ENCODE measurements at regions of chr7 and their contacts with region 1.

Region 1: GRCh38 chr7:94183289-94183749 is 179.2 kb upstream of the BET1 start:
- DNase-seq: peak; percentile 95
- ATAC-seq: peak; percentile 88
- H3K4me3 ChIP-seq: peak overlapping the region; percentile 29; the same call in 1 of the 2 replicates
- H3K27ac ChIP-seq: peak overlapping the region; percentile 97
- H3K4me1 ChIP-seq: peaks cover 24% of the 10 kb centered on the region
- H3K27me3 ChIP-seq: no peaks in the 10 kb centered on the region
- CTCF ChIP-seq: no peak

Region 2: DNA sequence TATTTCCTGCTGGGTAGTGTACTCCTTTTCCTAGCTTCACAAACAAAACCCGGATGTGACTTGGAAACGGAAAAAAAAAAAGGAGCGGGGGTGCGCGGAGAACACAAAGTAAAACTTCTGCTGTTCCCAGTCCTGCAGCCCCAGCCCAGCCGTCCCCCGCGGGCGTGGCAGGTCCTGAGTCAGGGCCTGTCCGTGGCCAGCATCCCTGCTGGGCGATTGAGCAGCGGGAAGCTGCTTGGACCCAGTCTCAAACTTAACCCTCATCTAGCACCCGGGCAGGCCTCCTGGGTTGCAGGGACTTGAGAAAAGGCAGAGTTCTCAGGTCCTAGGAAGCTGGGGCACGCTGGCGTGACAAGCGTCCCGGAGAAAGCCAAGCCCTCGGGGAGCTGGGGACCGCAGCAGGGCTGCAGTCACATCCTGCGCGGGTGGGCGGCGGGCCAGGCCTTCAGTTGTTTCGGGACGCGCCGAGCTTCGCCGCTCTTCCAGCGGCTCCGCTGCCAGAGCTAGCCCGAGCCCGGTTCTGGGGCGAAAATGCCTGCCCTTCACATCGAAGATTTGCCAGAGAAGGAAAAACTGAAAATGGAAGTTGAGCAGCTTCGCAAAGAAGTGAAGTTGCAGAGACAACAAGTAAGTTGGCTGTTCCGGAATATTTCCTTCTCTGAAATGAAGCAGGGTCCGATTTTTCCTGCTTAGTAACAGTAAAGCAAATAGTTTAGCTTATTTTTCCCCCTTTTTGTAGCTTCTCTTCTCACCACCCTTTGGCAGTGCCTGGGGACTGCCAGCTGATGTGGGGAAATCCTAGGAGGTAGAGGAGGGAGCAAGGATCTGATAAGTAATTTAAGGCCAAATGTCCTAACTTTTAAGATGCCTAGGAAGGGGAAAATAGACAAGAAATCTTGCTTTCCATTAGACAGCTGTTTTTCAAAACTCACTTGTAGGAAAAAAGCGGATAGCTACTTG is 261.4 kb before region 1 on chr7 and contains the start of gene GNG11:
- CTCF ChIA-PET with region 1: no interaction called
- POLR2A ChIA-PET with region 1: interaction called, 12 read pairs
- intact Hi-C with region 1: no loop called
- DNase-seq: peak; percentile 65
- ATAC-seq: peak; percentile 87
- H3K4me3 ChIP-seq: peak within 1 kb of the TSS; percentile 73
- H3K27ac ChIP-seq: peak within 1 kb of the TSS; percentile 68
- H3K4me1 ChIP-seq: no peaks in the 10 kb centered on the region
- H3K27me3 ChIP-seq: no peaks in the 10 kb centered on the region
- CTCF ChIP-seq: no peak
- total RNA-seq, gene GNG11: 3.0 and 4.4 TPM in 2 replicates

Region 3: GRCh38 chr7:94004024-94004951 is 179.0 kb before region 1 on chr7 and contains the start of gene BET1:
- CTCF ChIA-PET with region 1: no interaction called
- POLR2A ChIA-PET with region 1: no interaction called
- intact Hi-C with region 1: loop called (anchors 1 kb)
- DNase-seq: peak; percentile 97
- ATAC-seq: peak; percentile 92
- H3K4me3 ChIP-seq: peak within 1 kb of the TSS; percentile 99
- H3K27ac ChIP-seq: peak within 1 kb of the TSS; percentile 64
- H3K4me1 ChIP-seq: peaks cover 19% of the 10 kb centered on the region
- H3K27me3 ChIP-seq: no peaks in the 10 kb centered on the region
- CTCF ChIP-seq: no peak
- total RNA-seq, gene BET1: 7.9 and 12.1 TPM in 2 replicates

Region 4: DNA sequence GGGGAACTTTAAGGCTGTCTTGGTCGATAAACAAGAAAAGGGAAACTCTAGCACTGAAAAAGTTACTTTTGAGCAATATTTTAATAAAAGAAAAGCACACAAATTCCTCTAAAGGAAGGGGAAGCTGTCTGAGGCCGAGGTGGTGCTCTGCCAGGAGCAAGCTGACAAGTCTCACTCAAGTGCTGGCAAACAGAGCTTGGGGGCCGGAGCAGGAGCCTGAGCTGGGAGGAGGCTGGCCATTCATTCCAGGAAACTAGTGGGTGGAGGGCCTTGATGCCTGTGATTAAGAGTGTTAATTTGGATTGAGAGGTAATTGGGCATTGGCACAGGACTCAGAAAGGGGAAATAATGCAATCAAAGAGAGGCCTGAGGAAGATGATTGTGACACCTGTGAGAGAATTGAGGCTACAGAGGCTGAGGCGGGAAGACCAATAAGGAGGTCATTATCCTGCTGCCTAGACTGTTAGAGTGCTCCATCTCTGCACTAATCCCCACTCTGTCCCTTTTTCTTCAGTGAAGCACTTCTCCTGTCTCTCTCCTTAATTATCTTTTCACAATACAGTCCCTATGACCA is 56.4 kb after region 1 on chr7:
- CTCF ChIA-PET with region 1: no interaction called
- POLR2A ChIA-PET with region 1: no interaction called
- intact Hi-C with region 1: loop called (anchors 10 kb)
- DNase-seq: no peak
- ATAC-seq: no peak
- H3K4me3 ChIP-seq: no peak overlapping the region
- H3K27ac ChIP-seq: no peak overlapping the region
- H3K4me1 ChIP-seq: peaks cover 3% of the 10 kb centered on the region
- H3K27me3 ChIP-seq: no peaks in the 10 kb centered on the region
- CTCF ChIP-seq: no peak